ENCODE measurements at regions of chr15 and their contacts with region 1.

Region 1: DNA sequence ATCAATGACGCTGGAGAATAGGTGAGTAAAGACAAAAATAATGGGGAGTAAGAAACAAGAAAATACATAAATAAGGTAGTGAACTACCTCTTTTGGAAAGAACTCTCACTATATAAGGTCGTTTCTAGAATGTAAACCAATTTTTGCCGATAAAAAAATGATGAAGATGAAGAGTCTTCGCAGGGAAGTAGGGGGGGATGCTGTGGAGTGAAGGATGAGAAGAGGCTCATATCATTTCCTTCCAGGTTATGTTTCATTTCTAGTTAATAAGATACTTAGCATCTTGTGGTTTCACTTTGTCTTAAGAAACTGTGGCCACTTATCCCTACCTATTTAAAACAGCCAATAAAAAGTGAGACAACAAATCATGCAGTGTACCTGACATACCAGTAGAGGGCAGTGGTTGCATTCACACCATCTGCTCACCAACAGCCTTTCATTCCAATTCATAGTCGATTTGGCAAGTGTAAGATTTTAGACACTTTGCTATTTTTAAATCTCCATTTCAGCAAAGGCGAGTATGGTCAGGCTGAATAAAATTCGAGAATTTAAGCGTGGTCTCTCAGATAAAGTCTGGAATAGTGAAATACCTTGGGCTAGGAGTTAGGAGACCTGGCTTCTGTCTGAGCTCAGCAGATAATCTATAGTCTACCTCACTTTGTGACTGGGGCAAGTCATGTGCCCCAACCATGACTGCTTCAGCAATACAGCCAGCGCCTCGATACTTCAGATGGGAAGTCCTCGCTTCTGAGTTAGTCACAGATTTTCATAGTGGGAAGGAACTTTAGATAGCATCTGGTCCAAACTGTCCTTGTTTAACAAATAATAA is 28.9 kb upstream of the ICE2 start:
- DNase-seq: peak in 31 of 35 experiments; percentile 8 to 88 (median 41)
- ATAC-seq: peak; percentile 74 to 82 (median 76)
- H3K4me3 ChIP-seq: no peak overlapping the region
- H3K4me3 Mint-ChIP-seq: peak overlapping the region in 1 of 3 donors; percentile 37
- H3K27ac ChIP-seq: peak overlapping the region; percentile 53
- H3K27ac Mint-ChIP-seq: peak overlapping the region; percentile 78 to 84
- H3K4me1 ChIP-seq: peaks cover 0 to 20% of the 10 kb centered on the region in 2 experiments
- H3K4me1 Mint-ChIP-seq: peaks cover 53 to 59% (median 59%) of the 10 kb centered on the region in 3 donors
- H3K27me3 ChIP-seq: no peaks in the 10 kb centered on the region
- H3K27me3 Mint-ChIP-seq: no peaks in the 10 kb centered on the region

Region 2: GRCh38 chr15:60444289-60444912 is 63.4 kb before region 1 on chr15:
- CTCF ChIA-PET with region 1: interaction called in 1 of 2 experiments, 10 read pairs
- POLR2A ChIA-PET with region 1: interaction called in 1 of 2 experiments, 3 read pairs
- DNase-seq: peak in 1 of 35 experiments; percentile 14
- ATAC-seq: no peak
- H3K4me3 ChIP-seq: no peak overlapping the region
- H3K4me3 Mint-ChIP-seq: no peak overlapping the region
- H3K27ac ChIP-seq: no peak overlapping the region
- H3K27ac Mint-ChIP-seq: peak overlapping the region in 1 of 2 donors; percentile 6
- H3K4me1 ChIP-seq: no peaks in the 10 kb centered on the region
- H3K4me1 Mint-ChIP-seq: peaks cover 4 to 7% (median 4%) of the 10 kb centered on the region in 3 donors
- H3K27me3 ChIP-seq: no peaks in the 10 kb centered on the region
- H3K27me3 Mint-ChIP-seq: no peaks in the 10 kb centered on the region

Region 3: DNA sequence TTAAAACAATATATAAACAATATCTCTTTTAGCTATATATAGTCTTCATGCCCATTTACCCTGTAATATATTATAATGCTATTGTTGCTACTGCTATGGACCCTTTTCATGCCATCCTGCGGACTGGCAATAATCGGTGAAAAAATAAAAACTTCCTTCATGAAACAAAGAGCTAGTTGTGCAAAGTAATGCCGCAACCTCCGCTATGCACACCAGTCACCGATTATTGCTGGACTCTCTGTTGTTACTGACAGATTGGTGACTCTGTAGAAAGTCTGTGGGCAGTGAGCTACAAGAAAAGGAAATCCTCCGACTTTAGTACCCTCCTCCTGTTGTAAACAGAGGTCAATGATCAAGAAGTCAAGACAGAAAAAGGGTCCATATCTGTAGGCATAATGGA is 11.0 kb before region 1 on chr15:
- CTCF ChIA-PET with region 1: interaction called in 1 of 2 experiments, 12 read pairs
- POLR2A ChIA-PET with region 1: interaction called in 1 of 2 experiments, 3 read pairs
- DNase-seq: no peak
- ATAC-seq: no peak
- H3K4me3 ChIP-seq: no peak overlapping the region
- H3K4me3 Mint-ChIP-seq: no peak overlapping the region
- H3K27ac ChIP-seq: no peak overlapping the region
- H3K27ac Mint-ChIP-seq: peak overlapping the region in 1 of 2 donors; percentile 14
- H3K4me1 ChIP-seq: no peaks in the 10 kb centered on the region
- H3K4me1 Mint-ChIP-seq: peaks cover 11 to 12% (median 12%) of the 10 kb centered on the region in 3 donors
- H3K27me3 ChIP-seq: no peaks in the 10 kb centered on the region
- H3K27me3 Mint-ChIP-seq: no peaks in the 10 kb centered on the region